Dorsolateral prefrontal cortex (tissue), 120 donors: ENCODE measurements at regions of chr17 and their contacts with region 1.

Region 1: DNA sequence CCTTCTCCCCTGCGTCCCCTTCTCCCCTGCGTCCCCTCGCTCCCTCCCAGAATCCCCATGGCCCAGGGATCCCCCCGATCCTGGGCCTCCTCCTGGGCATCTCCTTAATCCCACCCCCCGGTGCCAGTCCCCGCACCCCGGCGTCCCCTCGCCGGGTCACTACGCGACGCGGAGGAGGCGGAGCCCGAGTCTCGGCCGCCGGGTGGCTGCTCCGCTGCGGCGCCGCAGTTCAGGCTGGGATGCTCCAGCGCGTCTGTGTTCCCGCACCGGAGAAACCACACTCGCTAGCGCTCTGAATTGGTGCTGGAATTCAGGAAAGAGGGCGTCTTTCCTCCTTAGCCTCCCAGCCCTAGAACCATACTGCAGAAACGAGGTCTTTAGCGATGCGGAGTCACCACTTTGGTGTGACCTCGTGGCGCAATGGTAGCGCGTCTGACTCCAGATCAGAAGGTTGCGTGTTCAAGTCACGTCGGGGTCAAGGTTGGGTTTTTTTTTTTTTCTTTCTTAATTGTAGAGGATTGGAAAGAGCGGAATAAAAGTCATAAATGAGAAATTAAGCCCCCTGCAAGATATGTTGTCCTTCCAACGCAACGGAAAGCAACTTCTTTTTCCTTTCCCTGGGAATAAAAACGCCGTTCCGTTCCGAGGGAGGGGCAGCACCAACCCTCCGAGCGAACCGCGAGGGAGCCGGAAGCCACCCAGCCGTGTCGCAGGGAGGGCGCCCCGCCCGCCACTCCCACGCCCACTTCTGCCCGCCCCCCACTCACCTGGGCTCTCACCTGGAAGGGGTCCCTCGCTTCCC is 25.7 kb upstream of the SLC47A1 start:
- DNase-seq: peak; percentile 83 to 96 (median 88)
- H3K4me3 ChIP-seq: peak overlapping the region; percentile 41 to 88 (median 72)
- H3K27ac ChIP-seq: peak overlapping the region; percentile 68 to 97 (median 93)
- H3K27me3 ChIP-seq: no peaks in the 10 kb centered on the region
- CTCF ChIP-seq: peak in 29 of 56 donors; percentile 6 to 53 (median 28)

Region 2: GRCh38 chr17:19464031-19465026 is 43.6 kb before region 1 on chr17:
- intact Hi-C with region 1: loop called in 1 of 2 experiments (anchors 5 kb)
- DNase-seq: peak in 2 of 10 donors; percentile 45 to 48
- H3K4me3 ChIP-seq: peak overlapping the region in 23 of 59 donors; percentile 0 to 46 (median 16)
- H3K27ac ChIP-seq: peak overlapping the region in 43 of 59 donors; percentile 1 to 87 (median 57)
- H3K27me3 ChIP-seq: no peaks in the 10 kb centered on the region
- CTCF ChIP-seq: no peak

Region 3: GRCh38 chr17:19724501-19725420 is 216.8 kb after region 1 on chr17:
- intact Hi-C with region 1: no loop called
- DNase-seq: peak in 6 of 10 donors; percentile 20 to 61 (median 46)
- H3K4me3 ChIP-seq: peak overlapping the region in 53 of 59 donors; percentile 4 to 59 (median 41)
- H3K27ac ChIP-seq: peak overlapping the region in 22 of 59 donors; percentile 12 to 100 (median 40)
- H3K27me3 ChIP-seq: no peaks in the 10 kb centered on the region
- CTCF ChIP-seq: peak in 1 of 56 donors; percentile 28